ENCODE measurements at regions of chr15 and their contacts with region 1.

Region 1: GRCh38 chr15:58103482-58103881 is 34.7 kb upstream of the AQP9 start:
- DNase-seq: no peak
- ATAC-seq: no peak

Region 2: DNA sequence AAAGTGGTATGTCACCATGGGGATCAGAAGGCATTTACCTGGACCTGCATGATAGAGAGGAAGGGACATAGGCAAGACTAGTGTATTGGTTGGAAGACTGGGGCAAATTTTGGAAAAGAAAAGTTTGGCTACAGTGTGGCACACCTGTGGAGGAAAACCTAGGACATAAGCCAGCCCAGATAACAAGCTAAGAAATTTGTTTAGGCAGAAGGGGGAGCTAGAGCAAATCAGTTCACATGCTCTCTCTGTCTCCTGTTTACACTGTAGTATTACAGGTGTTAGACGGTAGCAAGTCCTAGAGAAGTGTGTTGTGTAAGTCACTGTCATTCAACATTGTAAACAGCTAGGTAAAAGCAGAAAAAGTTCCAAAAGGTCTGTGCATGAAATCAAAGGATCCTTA is 26.1 kb before region 1 on chr15:
- intact Hi-C with region 1: loop called (anchors 1 kb)
- DNase-seq: no peak
- ATAC-seq: no peak

Measured in left ventricle myocardium superior (tissue), 1 donor.